Naive thymus-derived CD4-positive, alpha-beta T cell (primary cell): ENCODE measurements at regions of chr9 and their contacts with region 1.

Region 1: DNA sequence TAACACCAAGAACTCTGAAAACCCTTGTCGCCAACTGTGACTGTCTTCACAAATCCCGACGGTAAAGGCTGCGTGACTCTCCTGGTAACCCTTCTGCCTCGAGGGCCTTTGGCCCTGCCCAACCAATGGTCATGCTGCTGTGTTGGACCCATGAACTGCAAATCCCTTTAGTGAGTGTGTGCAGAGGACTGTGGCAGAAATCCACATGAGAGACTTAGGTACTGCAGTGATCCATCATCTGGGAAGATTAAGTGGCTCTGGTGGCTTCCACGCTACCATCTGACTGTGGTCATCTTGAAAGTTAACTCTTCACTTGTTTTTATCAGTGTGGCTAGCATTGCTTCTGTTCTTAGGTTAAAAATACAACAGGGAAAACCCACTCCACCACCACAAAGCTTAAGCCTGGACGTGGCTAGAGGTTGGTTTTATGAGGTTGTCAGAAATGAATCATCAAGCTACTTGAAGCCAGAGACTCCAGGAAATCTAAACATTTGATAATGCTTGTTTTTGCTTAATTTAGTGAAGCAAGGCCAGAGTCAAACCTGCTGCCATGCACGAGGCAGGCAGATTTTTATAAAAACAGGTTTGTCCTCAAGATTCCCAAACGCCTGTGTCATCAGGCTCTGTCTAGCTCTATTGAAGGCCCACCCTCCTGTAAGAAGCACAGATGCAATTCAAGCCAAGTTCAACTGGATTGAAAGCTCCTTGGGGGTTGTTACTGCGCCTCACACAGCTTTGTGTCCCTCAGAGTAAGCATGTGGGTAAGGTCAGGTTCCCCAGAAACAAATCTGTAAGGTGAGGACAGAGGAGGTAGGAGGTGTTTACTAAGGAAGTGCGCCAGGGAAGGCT is 52.7 kb upstream of the ERCC6L2 start:
- DNase-seq: peak in 1 of 9 donors; percentile 45
- ATAC-seq: no peak
- H3K4me3 ChIP-seq: no peak overlapping the region
- H3K4me3 Mint-ChIP-seq: peak overlapping the region in 1 of 10 donors; percentile 65
- H3K27ac ChIP-seq: no peak overlapping the region
- H3K27ac Mint-ChIP-seq: peak overlapping the region in 2 of 9 donors; percentile 6 to 70
- H3K4me1 ChIP-seq: no peaks in the 10 kb centered on the region
- H3K4me1 Mint-ChIP-seq: peaks cover 0 to 41% (median 4%) of the 10 kb centered on the region in 7 donors
- H3K27me3 ChIP-seq: no peaks in the 10 kb centered on the region
- H3K27me3 Mint-ChIP-seq: peaks cover 0 to 47% (median 0%) of the 10 kb centered on the region in 5 donors

Region 2: GRCh38 chr9:95852059-95853032 is 29.5 kb after region 1 on chr9:
- CTCF ChIA-PET with region 1: no interaction called
- POLR2A ChIA-PET with region 1: no interaction called
- intact Hi-C with region 1: loop called in 1 of 2 experiments (anchors 2 kb)
- DNase-seq: no peak
- ATAC-seq: no peak
- H3K4me3 ChIP-seq: no peak overlapping the region
- H3K4me3 Mint-ChIP-seq: peak overlapping the region in 1 of 10 donors; percentile 55
- H3K27ac ChIP-seq: no peak overlapping the region
- H3K27ac Mint-ChIP-seq: peak overlapping the region in 1 of 9 donors; percentile 54
- H3K4me1 ChIP-seq: no peaks in the 10 kb centered on the region
- H3K4me1 Mint-ChIP-seq: peaks cover 2 to 39% (median 11%) of the 10 kb centered on the region in 7 donors
- H3K27me3 ChIP-seq: no peaks in the 10 kb centered on the region
- H3K27me3 Mint-ChIP-seq: no peaks in the 10 kb centered on the region